PC-9 (cell line): ENCODE measurements at regions of chr12 and their contacts with region 1.

Region 1: GRCh38 chr12:31728917-31729640 is at the start of gene AMN1:
- DNase-seq: peak; percentile 97 to 100
- H3K4me3 ChIP-seq: peak within 1 kb of the TSS; percentile 80
- H3K27ac ChIP-seq: peak within 1 kb of the TSS; percentile 84
- H3K4me1 ChIP-seq: peaks cover 36% of the 10 kb centered on the region
- H3K27me3 ChIP-seq: no peaks in the 10 kb centered on the region
- CTCF ChIP-seq: no peak
- total RNA-seq, gene AMN1: 6.2 and 7.4 TPM in 2 replicates

Region 2: GRCh38 chr12:31456562-31456961 is 272.5 kb before region 1 on chr12:
- CTCF ChIA-PET with region 1: no interaction called
- POLR2A ChIA-PET with region 1: interaction called, 19 read pairs
- intact Hi-C with region 1: no loop called
- DNase-seq: no peak
- H3K4me3 ChIP-seq: no peak overlapping the region
- H3K27ac ChIP-seq: no peak overlapping the region
- H3K4me1 ChIP-seq: no peaks in the 10 kb centered on the region
- H3K27me3 ChIP-seq: no peaks in the 10 kb centered on the region
- CTCF ChIP-seq: no peak

Region 3: GRCh38 chr12:31669020-31669419 is 60.1 kb before region 1 on chr12:
- CTCF ChIA-PET with region 1: no interaction called
- POLR2A ChIA-PET with region 1: no interaction called
- intact Hi-C with region 1: no loop called
- DNase-seq: no peak
- H3K4me3 ChIP-seq: no peak overlapping the region
- H3K27ac ChIP-seq: no peak overlapping the region
- H3K4me1 ChIP-seq: no peaks in the 10 kb centered on the region
- H3K27me3 ChIP-seq: no peaks in the 10 kb centered on the region
- CTCF ChIP-seq: no peak

Region 4: GRCh38 chr12:31715283-31715825 is 13.7 kb before region 1 on chr12:
- CTCF ChIA-PET with region 1: interaction called, 4 read pairs
- POLR2A ChIA-PET with region 1: interaction called, 11 read pairs
- intact Hi-C with region 1: no loop called
- DNase-seq: peak in 1 of 2 experiments; percentile 28
- H3K4me3 ChIP-seq: no peak overlapping the region
- H3K27ac ChIP-seq: no peak overlapping the region
- H3K4me1 ChIP-seq: no peaks in the 10 kb centered on the region
- H3K27me3 ChIP-seq: no peaks in the 10 kb centered on the region
- CTCF ChIP-seq: no peak

Region 5: DNA sequence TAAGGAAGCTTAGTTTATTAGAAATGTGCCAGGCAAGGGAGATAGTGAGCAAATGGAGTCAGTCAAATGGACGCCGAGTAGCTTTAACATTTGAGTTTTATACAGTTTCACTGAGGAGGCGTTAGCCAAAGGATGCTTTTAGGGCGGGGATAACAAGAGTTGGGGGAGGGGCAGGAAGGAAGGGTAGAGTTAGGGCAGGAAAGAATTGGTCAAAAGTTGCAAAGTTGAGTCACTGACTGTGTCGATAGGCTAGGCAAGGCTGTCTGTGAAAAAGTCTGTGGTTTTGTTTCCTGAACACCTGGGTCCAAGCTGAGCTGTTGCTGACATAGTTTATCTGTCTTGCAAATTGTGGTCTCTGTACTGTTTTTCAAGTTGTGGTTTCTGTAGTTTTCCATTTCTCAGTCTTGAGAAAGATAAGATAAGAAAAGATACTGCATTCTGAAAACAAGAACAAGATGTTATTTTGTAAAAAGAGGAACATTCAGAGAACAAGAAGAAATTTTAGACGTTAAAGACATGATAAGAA is 167.5 kb after region 1 on chr12:
- CTCF ChIA-PET with region 1: no interaction called
- POLR2A ChIA-PET with region 1: no interaction called
- intact Hi-C with region 1: loop called (anchors 5 kb)
- DNase-seq: no peak
- H3K4me3 ChIP-seq: no peak overlapping the region
- H3K27ac ChIP-seq: no peak overlapping the region
- H3K4me1 ChIP-seq: no peaks in the 10 kb centered on the region; the same call in 1 of the 2 replicates
- H3K27me3 ChIP-seq: no peaks in the 10 kb centered on the region
- CTCF ChIP-seq: no peak

Region 6: DNA sequence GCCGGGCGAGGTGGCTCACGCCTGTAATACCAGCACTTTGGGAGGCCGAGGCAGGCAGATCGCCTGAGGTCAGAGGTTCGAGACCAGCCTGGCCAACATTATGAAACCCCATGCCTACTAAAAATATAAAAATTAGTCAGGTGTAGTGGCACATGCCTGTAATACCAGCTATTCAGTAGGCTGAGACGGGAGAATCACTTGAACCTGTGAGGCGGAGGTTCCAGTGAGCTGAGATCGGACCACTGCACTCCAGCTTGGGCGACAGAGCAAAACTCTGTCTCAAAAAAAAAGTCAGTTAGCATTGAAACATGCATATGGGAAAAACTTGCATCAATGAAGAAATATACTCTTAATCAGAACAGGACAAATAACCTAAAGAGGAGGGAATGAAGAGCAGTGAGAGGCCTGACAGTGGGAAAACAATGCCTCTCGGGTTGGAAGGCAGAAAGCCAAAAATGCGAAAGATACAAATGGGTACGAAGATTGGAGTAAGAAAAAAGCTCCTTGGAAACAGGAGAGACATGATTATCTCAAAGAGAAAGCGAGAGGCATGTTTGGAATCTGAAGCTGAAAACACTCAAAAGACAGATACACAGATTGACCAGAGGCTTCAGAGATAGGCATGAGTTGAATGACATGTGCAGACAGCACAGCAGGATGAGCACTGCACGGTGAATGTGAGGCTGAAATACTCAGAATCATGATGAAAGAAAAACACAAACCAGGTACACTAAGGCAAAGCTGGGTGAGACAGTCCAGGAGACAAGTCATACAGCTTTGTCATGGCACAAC is 260.7 kb after region 1 on chr12:
- CTCF ChIA-PET with region 1: no interaction called
- POLR2A ChIA-PET with region 1: interaction called, 14 read pairs
- intact Hi-C with region 1: no loop called
- DNase-seq: no peak
- H3K4me3 ChIP-seq: no peak overlapping the region
- H3K27ac ChIP-seq: no peak overlapping the region
- H3K4me1 ChIP-seq: no peaks in the 10 kb centered on the region
- H3K27me3 ChIP-seq: no peaks in the 10 kb centered on the region
- CTCF ChIP-seq: no peak